Right ventricle myocardium inferior (tissue), 1 donor: ENCODE measurements at regions of chr1 and their contacts with region 1.

Region 1: GRCh38 chr1:204127598-204128242 is 24.1 kb downstream of the ETNK2 start:
- DNase-seq: no peak
- ATAC-seq: peak; percentile 13

Region 2: GRCh38 chr1:203871107-203871875 is 256.4 kb before region 1 on chr1:
- intact Hi-C with region 1: loop called (anchors 1 kb)
- DNase-seq: no peak
- ATAC-seq: peak; percentile 80

Region 3: DNA sequence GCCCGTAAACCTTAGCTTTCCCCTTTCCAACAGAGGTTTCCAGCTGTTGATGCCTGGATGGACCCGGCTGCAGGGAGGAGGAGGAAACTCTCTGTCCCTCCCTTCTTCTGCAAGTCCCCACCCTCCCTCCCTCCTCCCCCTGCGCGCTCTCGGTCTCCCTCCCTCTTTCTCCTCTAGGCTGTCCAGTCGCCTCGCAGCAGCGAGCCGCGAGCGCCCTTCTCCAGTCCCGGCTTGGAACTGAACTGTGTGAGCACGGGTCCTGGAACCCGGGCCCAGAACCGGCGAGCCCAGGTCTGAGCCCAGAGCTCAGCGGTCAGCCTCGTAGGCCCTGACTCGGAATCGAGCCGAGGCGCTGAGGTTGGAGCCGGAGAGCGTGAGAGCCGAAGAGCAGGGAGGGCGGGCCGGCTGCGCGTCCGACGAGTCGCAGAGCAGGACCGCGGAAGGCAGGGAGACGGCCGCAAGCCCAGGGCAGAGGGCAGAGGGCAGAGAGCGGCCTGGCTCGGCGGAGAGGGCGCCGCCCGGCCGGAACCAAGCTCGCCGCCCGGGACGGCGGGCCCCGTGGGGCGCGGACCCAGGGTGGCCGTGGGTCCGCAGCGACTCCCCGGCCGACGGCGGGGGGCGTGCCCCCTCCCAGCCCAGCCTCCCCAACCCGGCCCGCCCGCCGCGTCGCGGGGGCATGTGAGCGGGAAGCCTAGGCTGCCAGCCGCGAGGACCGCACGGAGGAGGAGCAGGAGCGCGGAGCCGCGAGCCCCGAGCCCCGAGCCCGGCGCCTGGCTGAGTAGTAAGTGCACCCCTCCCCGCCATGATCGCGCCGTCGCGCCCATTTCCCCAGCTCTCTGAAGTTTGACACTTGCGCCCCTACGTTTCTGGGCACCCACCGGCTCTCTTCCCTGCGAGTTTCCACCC is 54.5 kb before region 1 on chr1 and contains the start of gene SOX13:
- intact Hi-C with region 1: loop called (anchors 2 kb)
- DNase-seq: peak; percentile 92
- ATAC-seq: peak; percentile 84
- total RNA-seq, gene SOX13: 12.1 TPM